PC-3 (cell line): ENCODE measurements at regions of chr14 and their contacts with region 1.

Region 1: GRCh38 chr14:28746247-28746646 is 20.3 kb upstream of the FOXG1 start:
- DNase-seq: no peak
- ATAC-seq: no peak
- H3K4me3 ChIP-seq: no peak overlapping the region
- H3K27ac ChIP-seq: no peak overlapping the region
- H3K4me1 ChIP-seq: peaks cover 27% of the 10 kb centered on the region
- H3K27me3 ChIP-seq: no peaks in the 10 kb centered on the region
- CTCF ChIP-seq: no peak

Region 2: GRCh38 chr14:28398506-28398905 is 347.7 kb before region 1 on chr14:
- CTCF ChIA-PET with region 1: no interaction called
- POLR2A ChIA-PET with region 1: no interaction called
- intact Hi-C with region 1: loop called (anchors 5 kb)
- DNase-seq: no peak
- ATAC-seq: no peak
- H3K4me3 ChIP-seq: no peak overlapping the region
- H3K27ac ChIP-seq: no peak overlapping the region
- H3K4me1 ChIP-seq: no peaks in the 10 kb centered on the region
- H3K27me3 ChIP-seq: no peaks in the 10 kb centered on the region
- CTCF ChIP-seq: no peak

Region 3: DNA sequence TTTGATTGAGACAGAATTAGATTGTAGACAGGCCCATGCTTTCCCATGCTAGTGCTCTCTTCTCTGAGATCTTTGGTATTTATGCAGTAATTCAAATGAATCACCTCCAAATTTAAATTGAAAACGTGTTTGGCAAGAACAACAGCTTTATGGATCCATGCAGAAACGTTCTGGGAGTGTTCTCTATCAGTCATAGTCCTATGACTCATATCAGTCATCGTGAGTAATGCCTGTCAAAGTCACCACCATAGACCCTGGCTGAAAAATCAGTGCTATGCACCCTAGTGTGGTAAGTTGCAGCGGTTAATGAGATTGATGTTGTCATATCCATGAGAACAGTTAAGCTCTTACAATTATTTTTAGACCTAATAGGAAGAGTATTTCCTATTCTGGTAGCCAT is 69.8 kb before region 1 on chr14:
- CTCF ChIA-PET with region 1: interaction called, 3 read pairs
- POLR2A ChIA-PET with region 1: no interaction called
- intact Hi-C with region 1: loop called (anchors 2 kb)
- DNase-seq: peak; percentile 98
- ATAC-seq: peak; percentile 96
- H3K4me3 ChIP-seq: peak overlapping the region; percentile 13; the same call in 1 of the 2 replicates
- H3K27ac ChIP-seq: peak overlapping the region; percentile 76
- H3K4me1 ChIP-seq: peaks cover 58% of the 10 kb centered on the region
- H3K27me3 ChIP-seq: no peaks in the 10 kb centered on the region
- CTCF ChIP-seq: no peak

Region 4: DNA sequence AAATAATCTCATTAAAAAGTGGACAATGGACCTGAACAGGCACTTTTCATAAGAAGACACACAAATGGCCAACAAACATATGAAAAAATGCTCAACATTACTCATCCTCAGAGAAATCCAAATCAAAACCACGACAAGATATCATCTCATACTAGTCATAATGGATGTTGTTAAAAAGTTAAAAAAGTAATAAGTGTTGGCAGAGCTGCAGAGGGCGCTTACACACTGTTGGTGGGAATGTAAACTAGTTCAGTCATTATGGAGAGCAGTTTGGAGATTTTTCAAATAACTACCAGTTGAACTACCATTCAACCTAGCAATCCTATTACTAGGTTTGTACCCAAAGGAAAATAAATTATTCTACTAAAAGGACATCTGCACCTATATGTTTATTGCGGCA is 67.6 kb after region 1 on chr14:
- CTCF ChIA-PET with region 1: no interaction called
- POLR2A ChIA-PET with region 1: no interaction called
- intact Hi-C with region 1: no loop called
- DNase-seq: peak; percentile 23
- ATAC-seq: peak; percentile 56
- H3K4me3 ChIP-seq: no peak overlapping the region
- H3K27ac ChIP-seq: no peak overlapping the region
- H3K4me1 ChIP-seq: no peaks in the 10 kb centered on the region
- H3K27me3 ChIP-seq: peaks cover 14% of the 10 kb centered on the region; the same call in 1 of the 2 replicates
- CTCF ChIP-seq: peak; percentile 25; the same call in 1 of the 2 replicates